ENCODE measurements at regions of chr11 and their contacts with region 1.

Region 1: DNA sequence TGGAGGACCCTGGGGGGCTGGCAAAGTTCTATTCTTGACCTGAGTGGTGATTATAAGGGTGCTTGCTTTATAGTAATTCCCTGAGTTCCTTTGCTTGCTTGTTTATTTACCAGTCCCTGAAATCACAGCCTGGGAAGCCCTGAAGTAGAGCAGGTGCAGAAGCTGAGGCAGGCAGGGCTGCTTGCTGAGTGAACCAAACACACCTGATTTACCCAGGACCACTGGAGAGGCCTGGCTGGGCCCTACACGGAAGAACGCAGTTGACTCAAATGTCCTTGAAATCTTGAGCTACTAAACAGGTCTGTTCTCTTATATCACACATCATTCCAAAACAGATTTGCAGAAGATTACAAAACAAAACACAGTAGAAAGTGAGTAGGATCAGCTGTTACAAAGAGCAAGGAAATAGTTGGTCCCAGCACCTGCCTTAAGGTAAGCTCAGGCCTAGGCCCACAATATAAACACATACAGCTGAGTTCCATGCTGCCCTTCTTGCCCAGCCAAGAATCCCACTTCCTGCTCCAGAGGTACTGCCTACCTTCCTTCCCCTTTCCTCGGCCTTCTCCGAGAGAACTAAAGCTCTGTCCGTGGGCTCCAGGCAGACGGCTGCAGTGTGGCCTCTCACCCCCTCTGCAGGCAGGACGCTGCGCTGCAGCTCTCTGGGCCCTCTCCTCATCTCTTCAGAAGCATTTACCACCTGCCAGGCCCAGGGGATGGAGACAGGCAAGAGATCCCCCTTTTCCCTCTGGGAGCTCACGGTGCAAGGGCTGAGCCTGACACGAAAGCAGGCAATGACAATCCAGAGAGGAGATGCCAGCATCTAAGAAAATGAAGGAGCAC is 46.1 kb upstream of the SCUBE2 start:
- DNase-seq: peak; percentile 62 to 90 (median 80)

Region 2: DNA sequence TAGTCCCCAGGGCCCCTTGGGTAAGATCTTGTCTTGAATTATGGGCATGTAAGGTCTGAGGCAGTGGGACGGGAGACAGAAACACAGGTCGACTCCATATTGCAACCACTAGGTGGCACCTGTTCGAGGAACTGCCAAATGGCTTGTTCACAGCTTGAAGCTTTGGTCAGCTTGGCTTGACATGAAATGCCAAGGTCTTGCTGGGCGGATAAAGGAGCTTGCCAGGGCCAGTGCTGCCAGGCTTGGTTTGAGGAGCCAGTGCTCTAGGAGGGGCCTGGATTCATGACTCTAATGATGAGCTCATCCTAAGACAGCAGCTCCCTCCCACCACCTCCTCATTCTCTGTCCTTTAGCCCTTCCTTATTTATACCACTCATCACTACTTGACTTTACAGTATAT is 121.8 kb before region 1 on chr11:
- intact Hi-C with region 1: loop called (anchors 10 kb)
- DNase-seq: peak; percentile 17 to 86 (median 66)

Region 3: DNA sequence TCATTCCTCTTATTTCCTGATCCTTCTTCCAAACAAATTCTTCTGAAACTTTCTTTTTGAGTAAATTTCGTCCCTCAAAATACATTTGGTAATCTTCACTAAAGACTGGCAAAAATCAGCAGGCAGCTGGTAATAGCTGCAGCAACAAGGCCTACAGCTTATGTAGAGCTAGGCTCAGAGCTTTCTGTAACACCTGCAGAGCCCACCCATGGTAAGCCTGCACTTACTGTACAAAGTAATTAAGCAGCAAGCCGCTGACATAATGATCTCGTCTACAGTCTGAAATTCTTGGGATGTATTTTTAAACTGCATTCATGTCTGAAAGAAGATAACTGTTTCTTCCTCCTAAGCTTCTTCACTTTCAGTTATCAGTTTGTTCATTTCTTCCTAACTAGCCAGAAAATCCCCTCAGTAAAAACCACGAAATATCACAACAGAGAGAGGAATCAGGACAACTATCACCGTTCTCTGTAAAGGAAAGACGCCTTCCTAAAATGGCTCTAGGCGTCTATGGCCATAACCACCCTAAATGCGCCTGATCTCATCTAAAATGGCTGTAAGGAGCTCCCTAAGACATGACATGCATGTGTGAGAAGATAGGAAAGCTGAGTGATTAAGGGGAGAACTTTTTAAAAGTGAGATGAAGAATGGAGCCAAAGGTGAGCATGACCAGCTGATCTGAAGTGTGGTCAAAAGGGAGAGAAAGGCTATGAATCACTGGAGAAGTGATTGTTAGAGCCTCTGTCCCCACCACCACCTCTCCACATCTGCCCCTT is 71.4 kb after region 1 on chr11:
- intact Hi-C with region 1: no loop called
- DNase-seq: no peak